Posterior vena cava (tissue), 2 donors: ENCODE measurements at regions of chr3 and their contacts with region 1.

Region 1: GRCh38 chr3:14124615-14125190 is at the starts of genes CHCHD4 and TMEM43:
- DNase-seq: peak; percentile 100
- total RNA-seq, gene CHCHD4: 7.9 TPM
- total RNA-seq, gene TMEM43: 107 to 115 TPM

Region 2: GRCh38 chr3:13895155-13896105 is 229.3 kb before region 1 on chr3:
- intact Hi-C with region 1: loop called in 1 of 2 experiments (anchors 10 kb)
- DNase-seq: peak; percentile 98

Region 3: GRCh38 chr3:14096745-14097144 is 28.0 kb before region 1 on chr3:
- intact Hi-C with region 1: no loop called
- DNase-seq: no peak

Region 4: GRCh38 chr3:14145665-14146382 is 21.1 kb after region 1 on chr3:
- intact Hi-C with region 1: loop called in 1 of 2 experiments (anchors 2 kb)
- DNase-seq: peak; percentile 83

Region 5: DNA sequence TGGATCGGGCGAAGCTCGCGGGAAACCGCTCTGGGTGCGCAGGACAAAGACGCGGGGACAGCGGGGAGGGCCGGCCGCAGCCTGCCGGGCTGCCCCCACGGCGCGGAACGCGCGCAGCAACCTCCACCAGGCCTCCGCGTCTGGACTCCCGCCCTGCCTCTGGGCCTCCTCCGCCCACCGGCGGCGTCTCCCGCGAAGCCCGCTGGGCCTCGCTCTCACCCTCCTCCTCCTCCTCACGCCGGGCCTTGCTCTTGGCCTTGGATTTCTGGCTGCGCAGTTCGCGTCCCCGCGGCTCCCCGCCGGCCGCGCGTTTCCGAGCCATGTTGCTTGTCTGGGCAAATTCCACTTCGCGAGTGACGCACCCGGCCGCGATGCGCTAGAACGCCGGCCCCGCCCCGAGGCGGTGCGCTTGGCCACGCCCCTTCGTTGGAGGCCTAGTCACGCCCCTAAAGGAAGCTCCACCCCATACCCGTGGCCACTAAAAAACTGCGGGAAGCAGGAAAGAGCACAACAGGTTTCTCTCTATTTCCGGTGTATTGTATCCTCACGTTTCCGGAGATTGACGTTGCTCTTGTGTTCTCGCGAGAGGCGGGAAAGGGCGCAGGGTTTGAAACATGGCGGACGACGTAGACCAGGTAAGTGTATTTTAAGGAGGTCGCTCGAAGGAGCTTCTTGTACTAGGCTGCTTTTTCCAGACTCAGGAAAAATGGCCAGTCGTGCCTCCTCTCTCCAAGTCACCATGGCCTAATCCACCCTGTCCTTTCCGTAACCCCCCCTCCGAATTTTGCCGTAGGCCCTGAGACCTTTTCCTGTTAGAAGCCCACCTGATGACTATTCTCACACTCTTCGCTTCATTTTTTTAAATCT is 53.8 kb after region 1 on chr3 and contains the starts of genes LSM3 and XPC:
- intact Hi-C with region 1: loop called (anchors 2 to 10 kb)
- DNase-seq: peak; percentile 99
- total RNA-seq, gene LSM3: 9.3 to 10.2 TPM
- total RNA-seq, gene XPC: 19.8 to 24.0 TPM

Region 6: DNA sequence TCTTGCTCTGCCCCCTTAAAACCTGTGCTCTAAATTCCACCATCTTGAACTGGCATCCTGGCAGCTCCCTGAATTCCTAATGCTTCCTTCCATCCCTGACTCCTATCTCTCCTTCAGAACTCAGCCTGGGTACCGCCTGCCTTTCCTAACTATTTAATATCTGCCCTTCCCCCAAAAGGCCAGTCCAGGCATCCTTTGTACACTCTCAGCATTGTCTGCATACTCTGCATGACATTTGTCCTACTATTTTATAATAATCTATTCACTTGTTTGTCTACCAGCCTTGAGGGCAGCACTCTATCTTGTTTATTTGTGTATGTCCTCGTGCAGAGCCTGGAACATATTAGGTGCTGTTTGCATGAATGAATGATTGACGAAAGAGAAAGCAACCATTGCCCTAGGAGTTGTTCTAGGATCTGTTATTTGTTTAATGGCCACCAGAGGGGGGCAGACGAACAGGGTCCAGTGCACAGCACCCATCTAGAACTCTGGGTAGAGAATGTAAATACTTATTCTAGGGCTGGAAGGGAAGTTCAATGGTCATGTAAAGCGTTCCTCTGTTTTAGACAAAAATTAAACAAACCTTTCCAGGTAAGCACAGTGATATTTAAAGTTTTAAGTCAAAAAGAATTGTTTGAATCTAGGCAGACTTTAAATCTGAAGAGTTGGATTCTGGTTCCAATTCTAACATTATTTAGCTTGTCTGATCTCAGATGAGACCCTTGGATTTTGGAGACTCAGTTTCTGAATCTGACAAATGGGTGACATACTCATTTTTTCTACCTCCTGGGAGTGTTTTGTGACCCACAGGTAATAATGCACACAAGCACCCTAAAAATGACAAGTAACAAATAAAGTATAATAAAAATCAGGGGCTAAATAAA is 1924.0 kb after region 1 on chr3:
- intact Hi-C with region 1: no loop called
- DNase-seq: no peak